Activated CD8-positive, alpha-beta memory T cell treated with anti-CD3 and anti-CD28 coated beads, Interleukin-2, amount 10 ng/mL, durations not matched to agents 7 days and 5 days (primary cell): ENCODE measurements at regions of chr1 and their contacts with region 1.

Region 1: GRCh38 chr1:225480825-225481434 is 53.1 kb upstream of the LBR start:
- DNase-seq: peak; percentile 67
- ATAC-seq: peak; percentile 68
- H3K4me3 Mint-ChIP-seq: no peak overlapping the region
- H3K27ac Mint-ChIP-seq: no peak overlapping the region
- H3K4me1 Mint-ChIP-seq: peaks cover 23% of the 10 kb centered on the region
- H3K27me3 Mint-ChIP-seq: peaks cover 8% of the 10 kb centered on the region

Region 2: GRCh38 chr1:225388372-225388771 is 92.6 kb before region 1 on chr1:
- CTCF ChIA-PET with region 1: no interaction called
- DNase-seq: no peak
- ATAC-seq: no peak
- H3K4me3 Mint-ChIP-seq: no peak overlapping the region
- H3K27ac Mint-ChIP-seq: no peak overlapping the region
- H3K4me1 Mint-ChIP-seq: peaks cover 4% of the 10 kb centered on the region
- H3K27me3 Mint-ChIP-seq: no peaks in the 10 kb centered on the region

Region 3: GRCh38 chr1:225422031-225422605 is 58.8 kb before region 1 on chr1:
- CTCF ChIA-PET with region 1: no interaction called
- DNase-seq: no peak
- ATAC-seq: no peak
- H3K4me3 Mint-ChIP-seq: no peak overlapping the region
- H3K27ac Mint-ChIP-seq: peak overlapping the region; percentile 34
- H3K4me1 Mint-ChIP-seq: peaks cover 54% of the 10 kb centered on the region
- H3K27me3 Mint-ChIP-seq: no peaks in the 10 kb centered on the region

Region 4: GRCh38 chr1:225772323-225772768 is 291.4 kb after region 1 on chr1:
- CTCF ChIA-PET with region 1: interaction called, 12 read pairs
- DNase-seq: peak; percentile 55
- ATAC-seq: peak; percentile 64
- H3K4me3 Mint-ChIP-seq: no peak overlapping the region
- H3K27ac Mint-ChIP-seq: no peak overlapping the region
- H3K4me1 Mint-ChIP-seq: no peaks in the 10 kb centered on the region
- H3K27me3 Mint-ChIP-seq: peaks cover 2% of the 10 kb centered on the region